Endothelial cell of umbilical vein (primary cell): ENCODE measurements at regions of chrX and their contacts with region 1.

Region 1: GRCh38 chrX:56978172-56978571 is 17.2 kb downstream of the SPIN3 start:
- DNase-seq: peak; percentile 47
- H3K4me3 ChIP-seq: no peak overlapping the region
- H3K27ac ChIP-seq: no peak overlapping the region
- H3K4me1 ChIP-seq: no peaks in the 10 kb centered on the region
- H3K27me3 ChIP-seq: no peaks in the 10 kb centered on the region
- CTCF ChIP-seq: peak; percentile 40 to 47
- POLR2A ChIP-seq: no peak

Region 2: DNA sequence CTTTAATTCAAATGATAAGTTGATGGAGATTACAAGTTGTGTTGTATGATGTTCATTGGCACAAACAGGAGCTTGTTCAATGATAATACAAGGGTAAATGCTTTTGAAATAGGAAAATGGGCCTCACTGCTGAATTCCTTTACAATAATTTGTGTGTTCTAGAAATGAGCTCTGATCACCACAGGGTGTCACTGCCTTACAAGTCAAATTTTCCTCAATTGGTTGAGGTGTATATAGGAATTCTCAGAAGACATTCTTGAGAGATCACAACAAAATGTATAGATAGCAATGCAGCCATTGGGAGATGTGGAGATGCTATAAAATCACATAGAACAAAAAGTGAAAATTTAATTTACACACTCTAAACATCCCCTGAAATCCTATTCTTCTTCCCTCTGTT is 696.4 kb before region 1 on chrX:
- CTCF ChIA-PET with region 1: interaction called, 3 read pairs
- POLR2A ChIA-PET with region 1: no interaction called
- dilution Hi-C with region 1: no loop called
- intact Hi-C with region 1: loop called (anchors 5 kb)
- DNase-seq: peak; percentile 20
- H3K4me3 ChIP-seq: no peak overlapping the region
- H3K27ac ChIP-seq: no peak overlapping the region
- H3K4me1 ChIP-seq: no peaks in the 10 kb centered on the region
- H3K27me3 ChIP-seq: no peaks in the 10 kb centered on the region
- CTCF ChIP-seq: no peak
- POLR2A ChIP-seq: no peak

Region 3: GRCh38 chrX:56764153-56764974 is 213.8 kb before region 1 on chrX:
- CTCF ChIA-PET with region 1: interaction called, 15 read pairs
- POLR2A ChIA-PET with region 1: no interaction called
- dilution Hi-C with region 1: no loop called
- intact Hi-C with region 1: no loop called
- DNase-seq: peak; percentile 64
- H3K4me3 ChIP-seq: no peak overlapping the region
- H3K27ac ChIP-seq: no peak overlapping the region
- H3K4me1 ChIP-seq: peaks cover 14% of the 10 kb centered on the region
- H3K27me3 ChIP-seq: no peaks in the 10 kb centered on the region
- CTCF ChIP-seq: peak; percentile 20 to 43
- POLR2A ChIP-seq: no peak

Region 4: DNA sequence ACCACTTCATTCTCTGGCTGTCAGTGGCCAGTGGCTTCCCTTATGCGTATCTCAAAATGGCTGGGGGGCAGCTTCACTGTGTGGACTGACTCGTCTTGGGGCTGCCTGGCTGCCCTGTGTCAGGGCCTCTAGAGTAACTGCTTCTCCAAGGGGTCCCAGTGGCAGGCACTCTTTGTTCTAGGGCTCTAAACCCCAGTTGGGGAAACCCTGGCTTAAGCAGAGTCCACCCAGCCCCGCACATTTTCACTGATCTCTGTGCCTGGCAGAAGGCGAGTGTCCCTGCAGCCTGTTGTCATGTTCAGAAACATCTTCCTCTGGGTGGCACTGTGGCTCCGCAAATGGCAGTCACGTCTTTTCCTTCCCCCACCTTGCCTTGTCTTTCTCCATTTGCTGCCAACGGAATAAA is 189.5 kb before region 1 on chrX:
- CTCF ChIA-PET with region 1: interaction called, 30 read pairs
- POLR2A ChIA-PET with region 1: no interaction called
- dilution Hi-C with region 1: no loop called
- intact Hi-C with region 1: no loop called
- DNase-seq: no peak
- H3K4me3 ChIP-seq: no peak overlapping the region
- H3K27ac ChIP-seq: no peak overlapping the region
- H3K4me1 ChIP-seq: peaks cover 7% of the 10 kb centered on the region
- H3K27me3 ChIP-seq: no peaks in the 10 kb centered on the region
- CTCF ChIP-seq: no peak
- POLR2A ChIP-seq: no peak

Region 5: GRCh38 chrX:56802921-56803849 is 175.0 kb before region 1 on chrX:
- CTCF ChIA-PET with region 1: interaction called, 18 read pairs
- POLR2A ChIA-PET with region 1: no interaction called
- dilution Hi-C with region 1: no loop called
- intact Hi-C with region 1: loop called (anchors 1 kb)
- DNase-seq: peak; percentile 55
- H3K4me3 ChIP-seq: no peak overlapping the region
- H3K27ac ChIP-seq: no peak overlapping the region
- H3K4me1 ChIP-seq: no peaks in the 10 kb centered on the region
- H3K27me3 ChIP-seq: no peaks in the 10 kb centered on the region
- CTCF ChIP-seq: peak; percentile 32 to 48
- POLR2A ChIP-seq: no peak